Activated T-helper 1 cell treated with anti-CD3 and anti-CD28 coated beads, Interleukin-12 subunit alpha, Interleukin-12 subunit beta, Interleukin-2, Interleukin-4 antibody, amounts not matched to agents 30 ng/mL and 10 ng/mL and 1 ng/mL, durations not matched to agents 14 hours and 24 hours and 36 hours (primary cell): ENCODE measurements at regions of chr12 and their contacts with region 1.

Region 1: GRCh38 chr12:74537707-74538385 is at the start of gene ATXN7L3B:
- DNase-seq: peak; percentile 93
- H3K4me3 Mint-ChIP-seq: peak within 1 kb of the TSS; percentile 92
- H3K27ac Mint-ChIP-seq: peak within 1 kb of the TSS; percentile 97
- H3K4me1 Mint-ChIP-seq: peaks cover 55% of the 10 kb centered on the region
- H3K27me3 Mint-ChIP-seq: peaks cover 2% of the 10 kb centered on the region
- total RNA-seq, gene ATXN7L3B: 24.8 and 25.4 TPM in 2 replicates

Region 2: GRCh38 chr12:74021937-74022336 is 515.9 kb before region 1 on chr12:
- intact Hi-C with region 1: loop called (anchors 1 kb)
- DNase-seq: no peak
- H3K4me3 Mint-ChIP-seq: no peak overlapping the region
- H3K27ac Mint-ChIP-seq: no peak overlapping the region
- H3K4me1 Mint-ChIP-seq: no peaks in the 10 kb centered on the region
- H3K27me3 Mint-ChIP-seq: no peaks in the 10 kb centered on the region

Region 3: GRCh38 chr12:74111688-74112360 is 426.0 kb before region 1 on chr12:
- intact Hi-C with region 1: loop called (anchors 5 kb)
- DNase-seq: no peak
- H3K4me3 Mint-ChIP-seq: no peak overlapping the region
- H3K27ac Mint-ChIP-seq: no peak overlapping the region
- H3K4me1 Mint-ChIP-seq: no peaks in the 10 kb centered on the region
- H3K27me3 Mint-ChIP-seq: no peaks in the 10 kb centered on the region

Region 4: GRCh38 chr12:74412606-74413230 is 125.1 kb before region 1 on chr12:
- intact Hi-C with region 1: loop called (anchors 5 kb)
- DNase-seq: no peak
- H3K4me3 Mint-ChIP-seq: no peak overlapping the region
- H3K27ac Mint-ChIP-seq: no peak overlapping the region
- H3K4me1 Mint-ChIP-seq: no peaks in the 10 kb centered on the region
- H3K27me3 Mint-ChIP-seq: peaks cover 3% of the 10 kb centered on the region

Region 5: GRCh38 chr12:74732826-74733225 is 195.0 kb after region 1 on chr12:
- intact Hi-C with region 1: no loop called
- DNase-seq: no peak
- H3K4me3 Mint-ChIP-seq: no peak overlapping the region
- H3K27ac Mint-ChIP-seq: no peak overlapping the region
- H3K4me1 Mint-ChIP-seq: no peaks in the 10 kb centered on the region
- H3K27me3 Mint-ChIP-seq: no peaks in the 10 kb centered on the region

Region 6: DNA sequence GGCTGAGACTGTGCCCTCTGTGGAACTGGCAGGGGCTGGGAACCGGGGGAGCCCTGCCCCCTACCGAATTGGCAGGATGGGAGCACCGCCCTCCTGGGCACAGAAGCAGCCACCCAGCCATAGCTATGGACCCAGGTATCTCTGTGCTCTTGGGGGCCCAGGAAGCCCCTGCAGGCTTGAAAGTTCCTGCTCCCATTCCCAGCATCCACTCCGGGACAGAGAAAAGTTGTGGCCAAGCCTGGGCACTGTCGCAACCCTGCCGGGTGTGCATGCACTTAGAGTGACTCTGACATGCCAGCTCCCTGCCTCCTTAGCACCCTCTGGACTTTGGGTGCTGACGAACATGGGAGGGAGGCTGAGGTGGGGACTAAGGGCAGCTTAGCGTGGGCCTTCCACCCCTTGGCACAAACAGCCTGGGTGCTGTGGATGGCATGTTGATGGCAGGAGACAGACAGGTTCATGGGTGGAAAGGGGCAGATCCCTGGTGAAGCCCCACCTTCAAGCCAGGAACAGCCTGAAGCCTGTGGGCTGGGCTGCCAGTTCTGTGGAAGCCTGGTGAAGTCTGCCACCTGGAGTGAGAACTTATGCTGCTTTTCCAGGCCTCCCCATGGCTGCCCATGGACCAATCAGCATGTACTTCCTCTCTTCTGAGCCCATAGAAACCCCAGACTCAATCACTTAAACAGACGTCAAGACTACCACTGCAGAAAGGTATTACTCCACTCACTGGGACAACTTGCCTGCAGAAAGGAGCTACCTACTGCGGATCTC is 278.7 kb after region 1 on chr12:
- intact Hi-C with region 1: no loop called
- DNase-seq: no peak
- H3K4me3 Mint-ChIP-seq: no peak overlapping the region
- H3K27ac Mint-ChIP-seq: no peak overlapping the region
- H3K4me1 Mint-ChIP-seq: no peaks in the 10 kb centered on the region
- H3K27me3 Mint-ChIP-seq: no peaks in the 10 kb centered on the region